ENCODE measurements at regions of chr1 and their contacts with region 1.

Region 1: DNA sequence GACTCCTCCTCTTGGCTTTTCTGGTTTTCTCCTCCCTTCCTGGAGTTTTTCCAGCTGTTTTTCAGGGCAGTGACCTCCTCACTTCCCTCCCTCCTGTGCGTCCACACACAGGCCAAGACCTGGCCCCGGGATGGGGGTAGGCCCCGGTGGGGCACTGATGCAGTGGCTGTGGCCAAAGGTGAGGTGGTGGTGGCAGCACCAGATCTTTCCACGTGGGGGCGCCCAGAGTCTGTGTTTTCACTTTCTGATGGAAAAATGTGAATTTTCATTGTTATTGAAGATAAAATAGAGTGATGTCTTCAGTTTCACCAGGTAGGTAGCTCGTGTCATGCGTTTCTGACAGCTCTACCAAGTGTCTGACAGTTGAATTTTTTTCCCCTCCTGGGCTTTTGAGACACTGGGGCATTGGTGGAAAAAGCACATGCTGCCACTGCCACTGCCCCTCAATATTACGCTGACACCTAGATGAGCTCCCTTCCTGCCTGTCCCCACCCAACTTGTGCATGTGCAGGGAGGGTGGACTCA is 39.9 kb upstream of the MAGOH start:
- DNase-seq: no peak
- H3K4me3 ChIP-seq: no peak overlapping the region
- CTCF ChIP-seq: peak; percentile 81

Region 2: GRCh38 chr1:53294567-53294966 is 16.3 kb after region 1 on chr1:
- CTCF ChIA-PET with region 1: interaction called, 105 read pairs
- POLR2A ChIA-PET with region 1: no interaction called
- DNase-seq: peak; percentile 23
- H3K4me3 ChIP-seq: no peak overlapping the region
- CTCF ChIP-seq: no peak

Region 3: DNA sequence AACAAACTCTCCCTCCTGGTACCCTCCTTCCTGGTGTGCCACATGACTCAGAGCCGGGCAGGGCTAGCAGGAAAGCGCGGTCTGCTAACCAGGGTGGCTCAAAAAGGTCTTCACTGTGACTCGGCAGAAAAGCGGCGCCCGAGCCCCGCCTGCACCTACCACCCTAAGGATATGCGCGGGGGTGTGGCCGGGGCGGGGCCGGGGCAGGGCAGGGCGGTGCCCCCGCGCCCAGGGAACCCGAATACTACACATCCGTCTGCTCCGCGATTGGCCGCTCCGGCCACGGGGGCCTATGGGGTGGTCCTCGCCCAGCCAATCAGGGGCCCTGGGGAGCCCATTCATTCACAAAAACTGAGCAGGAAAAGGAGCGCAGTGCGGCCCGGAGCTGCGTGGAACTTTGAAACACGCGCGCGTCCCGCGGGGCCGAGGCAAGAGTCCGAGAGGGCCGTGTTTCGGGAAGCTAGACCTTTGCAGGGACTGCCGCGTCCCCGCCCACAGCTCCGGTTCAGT is 47.9 kb after region 1 on chr1:
- CTCF ChIA-PET with region 1: interaction called, 10 read pairs
- POLR2A ChIA-PET with region 1: no interaction called
- DNase-seq: peak; percentile 12
- H3K4me3 ChIP-seq: peak overlapping the region; percentile 67
- CTCF ChIP-seq: no peak

Region 4: DNA sequence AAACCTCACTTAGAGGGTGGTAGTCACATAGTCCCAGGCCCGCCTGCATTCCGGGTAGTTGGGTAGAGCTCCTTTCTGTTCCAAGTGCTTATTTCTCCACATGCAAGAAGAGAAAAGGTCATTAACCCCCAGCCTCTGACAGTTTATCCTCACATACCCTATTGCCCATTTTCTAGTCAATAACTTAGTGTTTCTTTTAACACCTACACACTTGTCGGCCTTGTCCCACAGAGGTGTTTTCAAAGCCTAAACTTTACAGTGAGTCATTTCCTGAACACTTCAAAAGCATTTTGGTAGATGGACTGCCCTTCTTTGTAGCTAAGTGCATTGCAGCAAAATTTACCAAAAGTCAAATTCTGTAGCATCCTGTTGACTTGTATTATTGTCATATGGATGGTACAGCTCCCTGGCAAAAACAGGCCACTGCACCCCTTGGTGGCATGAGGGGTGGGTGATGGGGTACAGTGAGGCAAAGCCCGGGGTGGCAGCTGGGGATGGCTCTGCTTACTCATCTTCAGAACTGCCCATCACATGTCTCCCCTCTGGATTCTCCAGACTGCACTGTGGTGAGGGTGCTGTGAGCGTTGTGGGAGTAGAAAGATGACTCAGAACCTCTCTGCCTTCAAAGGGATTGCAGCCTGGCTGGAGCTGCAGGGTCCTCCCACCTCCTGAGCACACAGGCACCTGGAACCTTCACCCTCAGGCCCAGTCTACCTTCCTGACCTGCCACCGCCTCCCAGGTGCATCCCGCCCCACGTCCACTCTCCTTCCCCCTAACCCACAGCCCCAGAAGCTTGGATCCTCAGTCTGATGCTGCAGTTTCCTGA is 135.1 kb after region 1 on chr1:
- CTCF ChIA-PET with region 1: interaction called, 23 read pairs
- POLR2A ChIA-PET with region 1: no interaction called
- DNase-seq: peak; percentile 74
- H3K4me3 ChIP-seq: no peak overlapping the region
- CTCF ChIP-seq: no peak

Region 5: DNA sequence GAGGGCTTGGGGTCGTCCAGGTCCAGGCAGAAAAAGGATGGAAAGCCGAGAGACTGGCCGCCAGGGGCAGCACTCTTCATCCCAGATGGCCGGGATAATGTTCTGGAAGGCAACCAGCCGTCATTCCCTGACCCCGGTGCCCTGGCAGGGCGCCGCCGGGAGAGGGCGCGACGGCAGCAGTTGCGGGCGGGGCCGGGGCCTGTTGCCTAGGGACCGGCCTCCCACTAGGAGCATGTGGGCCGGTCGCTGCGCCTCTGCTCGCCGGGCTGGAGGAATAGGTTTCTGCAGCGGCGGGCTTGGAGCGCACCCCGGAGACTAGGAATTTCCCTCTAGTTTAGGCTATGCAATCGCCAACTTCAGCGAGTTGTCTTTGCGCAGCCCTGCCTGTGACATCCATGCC is 191.9 kb after region 1 on chr1:
- CTCF ChIA-PET with region 1: interaction called, 77 read pairs
- POLR2A ChIA-PET with region 1: no interaction called
- DNase-seq: no peak
- H3K4me3 ChIP-seq: no peak overlapping the region
- CTCF ChIP-seq: peak; percentile 86

Region 6: GRCh38 chr1:53826367-53826766 is 548.1 kb after region 1 on chr1:
- CTCF ChIA-PET with region 1: interaction called, 11 read pairs
- POLR2A ChIA-PET with region 1: no interaction called
- DNase-seq: no peak
- H3K4me3 ChIP-seq: no peak overlapping the region
- CTCF ChIP-seq: peak; percentile 24